Cardiac septum (tissue), 1 donor: ENCODE measurements at regions of chr19 and their contacts with region 1.

Region 1: GRCh38 chr19:16283210-16284061 is 41.2 kb upstream of the KLF2 start:
- DNase-seq: peak; percentile 92

Region 2: DNA sequence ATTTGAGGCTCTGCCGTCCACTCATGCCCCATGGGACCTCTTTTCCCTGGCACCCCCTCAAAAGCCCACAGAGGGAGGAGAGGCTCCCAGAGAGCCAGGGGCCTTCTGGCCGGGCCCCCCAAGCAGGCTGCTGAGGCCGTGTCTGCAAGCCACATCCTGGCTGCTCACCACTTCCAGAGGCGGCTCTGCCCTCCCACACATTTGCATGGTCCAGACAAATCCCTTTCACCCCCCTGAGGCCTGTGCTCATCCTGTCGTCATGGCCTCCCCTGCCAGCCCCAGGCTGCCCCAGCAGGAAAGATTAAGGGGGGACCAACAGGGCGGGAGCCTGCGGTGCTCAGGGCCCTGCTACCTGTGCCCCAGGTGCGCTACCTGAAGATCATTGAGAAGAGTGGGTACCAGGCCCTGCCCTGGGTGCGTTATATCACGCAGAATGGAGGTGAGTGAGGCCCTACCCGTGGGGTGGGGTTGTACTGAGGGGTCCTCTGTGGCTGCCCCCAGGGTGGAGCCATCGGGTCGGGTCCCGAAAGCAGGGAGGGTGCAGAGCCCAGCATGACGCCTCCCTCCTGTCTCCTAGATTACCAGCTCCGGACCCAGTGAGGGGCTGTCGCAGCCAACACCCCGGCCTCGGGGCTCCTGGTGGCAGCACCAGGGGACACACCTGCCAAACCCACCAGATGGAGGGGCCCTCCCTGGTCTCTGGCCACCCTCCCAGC is 49.4 kb before region 1 on chr19:
- intact Hi-C with region 1: no loop called
- DNase-seq: no peak

Region 3: GRCh38 chr19:16324384-16325160 is 41.1 kb after region 1 on chr19 and contains the start of gene KLF2:
- intact Hi-C with region 1: loop called (anchors 2 kb)
- DNase-seq: peak; percentile 98
- total RNA-seq, gene KLF2: 44.6 TPM